Activated CD8-positive, alpha-beta T cell treated with anti-CD3 and anti-CD28 coated beads, Interleukin-2, amount 10 ng/mL, durations not matched to agents 7 days and 5 days (primary cell): ENCODE measurements at regions of chr15 and their contacts with region 1.

Region 1: DNA sequence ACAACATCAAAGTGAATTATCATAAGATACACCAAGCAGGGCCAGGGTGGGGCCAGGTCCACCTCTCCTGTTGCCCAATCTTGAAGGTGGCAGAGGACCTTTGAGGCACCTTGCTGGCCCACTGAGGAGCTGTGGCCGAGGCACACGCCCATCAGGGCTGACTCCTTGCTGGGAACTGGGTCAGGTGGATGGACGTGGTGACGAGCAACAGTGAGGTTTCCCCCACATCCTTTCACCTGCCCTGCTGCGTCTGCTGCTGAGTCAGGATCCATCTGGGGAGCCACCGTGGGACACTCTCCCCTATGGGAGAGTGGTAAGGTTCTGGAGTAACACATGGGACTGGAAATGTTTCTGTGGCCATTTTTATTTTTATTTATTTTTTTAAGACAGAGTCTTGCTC is 17.3 kb upstream of the FURIN start:
- DNase-seq: peak; percentile 64
- ATAC-seq: peak; percentile 25
- H3K4me3 Mint-ChIP-seq: peak overlapping the region; percentile 58
- H3K27ac Mint-ChIP-seq: peak overlapping the region; percentile 86
- H3K4me1 Mint-ChIP-seq: peaks cover 68% of the 10 kb centered on the region
- H3K27me3 Mint-ChIP-seq: no peaks in the 10 kb centered on the region

Region 2: GRCh38 chr15:90829942-90830440 is 21.1 kb before region 1 on chr15:
- CTCF ChIA-PET with region 1: interaction called, 6 read pairs
- POLR2A ChIA-PET with region 1: interaction called, 14 read pairs
- DNase-seq: peak; percentile 67
- ATAC-seq: peak; percentile 86
- H3K4me3 Mint-ChIP-seq: peak overlapping the region; percentile 62
- H3K27ac Mint-ChIP-seq: peak overlapping the region; percentile 95
- H3K4me1 Mint-ChIP-seq: peaks cover 72% of the 10 kb centered on the region
- H3K27me3 Mint-ChIP-seq: no peaks in the 10 kb centered on the region

Region 3: GRCh38 chr15:90839187-90840071 is 11.7 kb before region 1 on chr15:
- CTCF ChIA-PET with region 1: interaction called, 20 read pairs
- POLR2A ChIA-PET with region 1: interaction called, 34 read pairs
- DNase-seq: no peak
- ATAC-seq: no peak
- H3K4me3 Mint-ChIP-seq: peak overlapping the region; percentile 56
- H3K27ac Mint-ChIP-seq: peak overlapping the region; percentile 74
- H3K4me1 Mint-ChIP-seq: peaks cover 61% of the 10 kb centered on the region
- H3K27me3 Mint-ChIP-seq: no peaks in the 10 kb centered on the region

Region 4: GRCh38 chr15:90869601-90870353 is 18.7 kb after region 1 on chr15:
- CTCF ChIA-PET with region 1: interaction called, 4 read pairs
- POLR2A ChIA-PET with region 1: interaction called, 10 read pairs
- DNase-seq: peak; percentile 54
- ATAC-seq: peak; percentile 37
- H3K4me3 Mint-ChIP-seq: peak overlapping the region; percentile 89
- H3K27ac Mint-ChIP-seq: peak overlapping the region; percentile 94
- H3K4me1 Mint-ChIP-seq: peaks cover 56% of the 10 kb centered on the region
- H3K27me3 Mint-ChIP-seq: no peaks in the 10 kb centered on the region